Sigmoid colon (tissue), 7 donors: ENCODE measurements at regions of chr9 and their contacts with region 1.

Region 1: DNA sequence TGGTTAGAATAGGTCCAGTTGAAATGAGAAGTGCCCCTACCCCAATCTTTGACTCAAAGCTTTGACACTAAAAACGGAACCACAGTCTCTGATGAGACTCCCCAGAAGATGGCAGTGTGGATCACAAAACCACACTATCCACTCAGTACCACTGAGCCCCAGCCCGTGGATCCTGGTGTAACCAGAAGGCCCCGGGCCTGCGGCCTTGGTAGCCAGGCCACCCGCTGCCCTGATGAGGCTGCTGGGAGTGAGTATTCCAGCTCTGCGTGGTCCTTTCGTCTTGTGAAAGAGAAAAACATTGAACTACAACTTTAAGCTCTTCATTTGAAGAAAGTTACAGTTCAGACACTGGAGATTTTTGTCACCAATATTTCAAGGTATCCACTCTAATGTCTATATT is 42.2 kb upstream of the FBP1 start:
- DNase-seq: peak; percentile 88
- H3K4me3 ChIP-seq: no peak overlapping the region
- H3K27ac ChIP-seq: peak overlapping the region in 1 of 4 donors; percentile 31
- H3K4me1 ChIP-seq: no peaks in the 10 kb centered on the region
- H3K27me3 ChIP-seq: no peaks in the 10 kb centered on the region
- CTCF ChIP-seq: peak; percentile 60 to 74 (median 66)
- EP300 ChIP-seq: no peak
- POLR2A ChIP-seq: no peak

Region 2: DNA sequence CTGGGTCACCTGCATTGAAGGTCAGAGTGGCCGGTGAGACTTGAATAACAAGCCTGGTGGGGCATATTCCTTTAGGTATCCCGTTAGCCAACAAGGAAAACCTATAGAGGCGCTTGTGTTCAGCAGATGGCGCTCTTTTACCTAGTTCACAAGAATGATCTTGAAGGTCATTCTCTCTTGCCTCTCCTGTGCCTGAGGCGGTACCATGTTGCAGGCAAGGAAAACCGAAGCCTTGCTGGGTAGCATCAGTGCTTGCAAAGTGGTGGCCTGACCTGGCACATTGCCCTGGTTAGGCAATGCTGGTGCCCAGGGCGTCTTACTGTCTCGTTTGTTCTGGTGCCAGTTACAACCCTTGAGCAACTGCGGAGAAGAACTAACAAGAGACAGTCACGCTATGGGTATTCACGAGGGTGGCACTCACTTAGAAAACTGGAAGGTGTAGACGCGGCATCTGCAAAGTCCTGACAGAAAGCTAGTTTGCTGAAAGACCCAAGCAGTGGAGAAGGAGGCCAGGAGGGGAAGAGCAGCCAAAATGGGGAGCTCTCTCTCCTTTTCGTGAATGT is 101.7 kb after region 1 on chr9:
- intact Hi-C with region 1: loop called (anchors 5 kb)
- DNase-seq: peak; percentile 96
- H3K4me3 ChIP-seq: no peak overlapping the region
- H3K27ac ChIP-seq: peak overlapping the region in 3 of 4 donors; percentile 21 to 69 (median 51)
- H3K4me1 ChIP-seq: peaks cover 0 to 10% (median 6%) of the 10 kb centered on the region in 4 donors
- H3K27me3 ChIP-seq: no peaks in the 10 kb centered on the region
- CTCF ChIP-seq: peak; percentile 50 to 63 (median 58)
- EP300 ChIP-seq: peak in 2 of 4 donors; percentile 4 to 54
- POLR2A ChIP-seq: no peak

Region 3: DNA sequence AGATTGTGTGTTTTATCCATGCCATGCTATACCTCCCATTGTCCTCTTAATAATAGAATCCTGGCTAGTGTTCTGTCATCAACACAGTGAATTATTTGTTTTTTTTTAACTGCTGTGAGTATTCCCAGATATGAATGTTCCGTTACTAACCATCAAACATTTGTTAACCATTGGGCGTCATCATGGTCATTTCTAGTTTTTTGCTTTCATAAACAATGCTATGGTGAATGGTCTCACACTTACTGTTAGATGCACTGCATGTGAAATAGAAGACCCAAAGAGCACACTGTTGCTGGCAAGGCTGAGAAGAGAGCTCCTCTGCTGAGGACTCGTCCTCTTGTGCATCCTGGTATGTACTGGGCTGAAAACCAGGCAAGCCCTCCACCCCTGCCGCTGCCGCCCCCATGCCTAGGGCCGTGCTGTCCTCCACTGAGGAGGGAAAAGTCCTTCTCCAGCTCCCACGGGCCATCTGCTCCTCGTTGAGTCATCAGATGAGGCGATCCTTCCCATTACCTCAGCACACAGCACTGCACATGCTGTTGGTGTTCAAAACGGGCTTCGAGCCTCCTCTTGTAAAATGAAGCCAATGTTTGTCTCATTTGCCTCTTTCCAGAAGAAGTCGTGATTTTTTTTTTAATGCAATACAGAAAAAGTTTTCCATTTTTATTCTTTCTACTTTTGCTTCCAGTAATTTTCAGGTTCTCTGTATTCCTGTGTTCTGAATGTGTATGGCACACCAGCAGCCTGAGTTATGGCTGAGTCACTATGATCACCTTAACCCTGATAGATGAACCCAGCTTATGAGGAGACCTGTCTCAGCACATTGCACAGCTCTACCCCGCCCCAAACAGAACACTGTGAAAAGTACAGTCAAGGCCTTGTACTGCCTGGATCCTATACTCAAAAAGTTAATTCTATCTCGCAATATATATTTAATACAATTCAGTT is 264.0 kb after region 1 on chr9:
- intact Hi-C with region 1: no loop called
- DNase-seq: peak; percentile 86
- H3K4me3 ChIP-seq: no peak overlapping the region
- H3K27ac ChIP-seq: peak overlapping the region in 3 of 4 donors; percentile 31 to 73 (median 73)
- H3K4me1 ChIP-seq: peaks cover 0 to 27% (median 18%) of the 10 kb centered on the region in 4 donors
- H3K27me3 ChIP-seq: no peaks in the 10 kb centered on the region
- CTCF ChIP-seq: no peak
- EP300 ChIP-seq: no peak
- POLR2A ChIP-seq: no peak

Region 4: GRCh38 chr9:95127249-95128176 is 446.0 kb after region 1 on chr9:
- intact Hi-C with region 1: loop called (anchors 2 kb)
- DNase-seq: peak; percentile 94
- H3K4me3 ChIP-seq: peak overlapping the region; percentile 14 to 48 (median 34)
- H3K27ac ChIP-seq: peak overlapping the region in 3 of 4 donors; percentile 3 to 62 (median 5)
- H3K4me1 ChIP-seq: peaks cover 0 to 28% (median 10%) of the 10 kb centered on the region in 4 donors
- H3K27me3 ChIP-seq: no peaks in the 10 kb centered on the region
- CTCF ChIP-seq: peak; percentile 91 to 98 (median 96)
- EP300 ChIP-seq: no peak
- POLR2A ChIP-seq: no peak

Region 5: DNA sequence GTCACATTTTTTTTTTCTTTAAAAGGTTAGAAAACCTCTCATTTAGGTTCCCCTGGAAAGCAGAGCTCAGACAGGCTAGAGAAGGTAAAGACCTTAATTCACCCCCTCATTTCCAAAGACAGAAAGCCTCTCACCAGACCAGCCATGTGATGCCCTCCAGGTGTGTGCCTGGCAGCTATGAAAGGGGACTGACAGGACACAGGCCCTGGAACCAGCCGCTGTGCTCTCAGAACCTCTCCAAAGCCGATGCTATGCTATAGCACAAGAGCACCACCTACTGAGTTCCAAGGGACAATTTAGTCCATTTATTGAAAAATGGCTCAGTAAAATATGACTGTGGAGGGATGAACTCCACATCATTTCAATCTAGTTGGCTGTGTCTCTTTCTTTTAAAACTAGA is 587.2 kb after region 1 on chr9:
- intact Hi-C with region 1: loop called (anchors 5 kb)
- DNase-seq: no peak
- H3K4me3 ChIP-seq: no peak overlapping the region
- H3K27ac ChIP-seq: no peak overlapping the region
- H3K4me1 ChIP-seq: peaks cover 0 to 8% (median 6%) of the 10 kb centered on the region in 4 donors
- H3K27me3 ChIP-seq: no peaks in the 10 kb centered on the region
- CTCF ChIP-seq: peak in 1 of 4 experiments; percentile 19
- EP300 ChIP-seq: no peak
- POLR2A ChIP-seq: no peak